ENCODE measurements at regions of chr3 and their contacts with region 1.

Region 1: DNA sequence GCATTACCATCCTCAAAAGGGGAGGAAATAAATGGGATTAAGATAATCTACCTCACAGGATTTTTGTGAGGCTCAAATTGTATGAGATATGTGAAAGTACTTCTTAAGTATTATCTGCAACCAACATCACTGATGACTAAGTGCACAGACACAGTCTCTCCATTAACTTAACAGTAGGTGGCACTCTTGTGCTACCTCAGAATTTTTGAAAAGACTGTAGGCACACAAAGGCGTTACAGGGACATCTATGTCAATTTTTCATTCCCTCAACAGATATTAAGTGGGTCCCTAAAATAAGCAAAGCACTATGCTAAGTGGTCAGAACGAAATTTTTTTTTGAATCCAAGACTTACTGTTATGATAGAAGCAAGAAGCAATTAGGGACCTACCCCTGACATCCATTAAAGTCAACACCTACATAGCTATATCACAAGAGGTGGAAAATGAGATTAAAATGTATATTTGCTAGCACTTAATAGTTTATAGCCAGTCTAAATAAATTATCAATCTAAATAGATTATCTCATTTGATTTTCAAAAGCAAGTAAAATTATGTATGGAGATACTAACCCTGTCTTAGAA is 52.9 kb downstream of the RYK start:
- DNase-seq: peak; percentile 76
- H3K4me3 Mint-ChIP-seq: no peak overlapping the region
- H3K27ac Mint-ChIP-seq: peak overlapping the region; percentile 20
- H3K4me1 Mint-ChIP-seq: peaks cover 29% of the 10 kb centered on the region
- H3K27me3 Mint-ChIP-seq: no peaks in the 10 kb centered on the region
- CTCF ChIP-seq: peak; percentile 83

Region 2: DNA sequence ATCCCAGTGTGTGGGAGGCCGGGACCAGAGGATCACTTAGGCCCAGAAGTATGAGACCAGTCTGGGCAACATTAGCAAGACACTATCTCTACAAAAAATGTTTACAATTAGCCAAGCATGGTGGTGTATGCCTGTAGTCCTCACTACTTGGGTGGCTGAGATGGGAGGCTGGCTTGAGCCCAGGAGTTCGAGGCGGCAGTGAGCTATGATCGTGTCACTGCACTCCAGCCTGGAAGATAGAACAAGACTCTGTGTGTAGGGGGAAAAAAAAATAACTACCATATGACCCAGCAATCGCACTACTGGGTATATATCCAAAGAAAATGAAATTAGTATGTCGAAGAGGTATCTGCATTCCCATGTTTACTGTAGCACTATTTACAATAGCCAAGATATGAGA is 30.3 kb after region 1 on chr3:
- CTCF ChIA-PET with region 1: interaction called, 12 read pairs
- POLR2A ChIA-PET with region 1: interaction called, 5 read pairs
- intact Hi-C with region 1: no loop called
- DNase-seq: no peak
- H3K4me3 Mint-ChIP-seq: no peak overlapping the region
- H3K27ac Mint-ChIP-seq: no peak overlapping the region
- H3K4me1 Mint-ChIP-seq: peaks cover 33% of the 10 kb centered on the region
- H3K27me3 Mint-ChIP-seq: no peaks in the 10 kb centered on the region
- CTCF ChIP-seq: no peak

Region 3: GRCh38 chr3:134299185-134299887 is 101.6 kb after region 1 on chr3:
- CTCF ChIA-PET with region 1: interaction called, 64 read pairs
- POLR2A ChIA-PET with region 1: interaction called, 6 read pairs
- intact Hi-C with region 1: loop called (anchors 1 kb)
- DNase-seq: peak; percentile 47
- H3K4me3 Mint-ChIP-seq: no peak overlapping the region
- H3K27ac Mint-ChIP-seq: peak overlapping the region; percentile 73
- H3K4me1 Mint-ChIP-seq: peaks cover 15% of the 10 kb centered on the region
- H3K27me3 Mint-ChIP-seq: no peaks in the 10 kb centered on the region
- CTCF ChIP-seq: peak; percentile 15

Region 4: GRCh38 chr3:134381827-134382442 is 184.2 kb after region 1 on chr3:
- CTCF ChIA-PET with region 1: no interaction called
- POLR2A ChIA-PET with region 1: no interaction called
- intact Hi-C with region 1: loop called (anchors 5 kb)
- DNase-seq: peak; percentile 67
- H3K4me3 Mint-ChIP-seq: no peak overlapping the region
- H3K27ac Mint-ChIP-seq: peak overlapping the region; percentile 14
- H3K4me1 Mint-ChIP-seq: peaks cover 14% of the 10 kb centered on the region
- H3K27me3 Mint-ChIP-seq: no peaks in the 10 kb centered on the region
- CTCF ChIP-seq: no peak